ENCODE measurements at regions of chr3 and their contacts with region 1.

Region 1: GRCh38 chr3:106036696-106037095 is 167.9 kb upstream of the CBLB start:
- DNase-seq: no peak
- ATAC-seq: no peak
- H3K4me3 ChIP-seq: no peak overlapping the region
- H3K27ac ChIP-seq: no peak overlapping the region
- H3K4me1 ChIP-seq: no peaks in the 10 kb centered on the region
- H3K27me3 ChIP-seq: no peaks in the 10 kb centered on the region
- CTCF ChIP-seq: no peak
- EP300 ChIP-seq: no peak
- POLR2A ChIP-seq: no peak
- RAD21 ChIP-seq: no peak

Region 2: DNA sequence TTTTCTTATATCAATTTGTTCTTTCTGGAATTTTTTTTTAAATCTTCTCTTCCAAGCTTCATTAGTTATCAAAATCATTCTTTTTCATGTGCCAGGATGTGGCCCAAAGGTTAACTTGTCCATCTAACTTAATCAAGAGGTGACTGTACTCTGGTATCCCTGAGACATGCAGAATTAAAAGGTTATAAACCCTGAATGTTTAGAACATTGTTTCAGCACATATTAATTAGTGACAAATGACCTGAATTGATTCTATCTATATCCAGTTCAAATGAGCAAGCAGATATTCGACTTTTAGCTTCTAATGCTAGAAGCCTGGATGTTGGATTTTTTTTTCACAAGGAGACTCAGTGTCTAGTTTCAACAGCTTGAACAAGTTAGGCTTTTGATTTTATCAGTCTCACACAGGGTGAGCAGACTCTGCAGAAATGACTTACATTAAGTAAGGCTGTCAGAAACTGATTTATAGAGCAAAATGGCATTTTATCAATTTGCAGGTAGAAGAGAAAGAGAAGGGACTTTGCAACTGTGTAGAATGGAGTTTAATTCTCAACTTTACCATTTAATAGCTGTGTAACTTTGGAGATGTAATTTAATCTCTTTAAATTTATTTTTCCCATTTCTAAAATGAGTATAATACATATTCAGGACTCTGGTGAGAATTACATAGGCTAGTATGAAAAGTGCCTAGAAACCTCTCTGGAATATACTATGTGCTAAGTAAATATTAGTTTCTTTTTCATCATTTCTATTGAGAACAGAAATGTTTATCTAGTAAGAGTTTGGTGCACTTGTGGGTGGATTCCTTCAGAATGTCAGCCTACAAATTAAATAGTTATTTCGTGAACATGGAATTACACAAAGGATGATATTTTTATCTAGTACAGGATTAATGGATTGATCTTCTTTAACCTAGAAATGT is 570.0 kb before region 1 on chr3:
- CTCF ChIA-PET with region 1: no interaction called
- POLR2A ChIA-PET with region 1: no interaction called
- RAD21 ChIA-PET with region 1: no interaction called
- SMC1A ChIA-PET with region 1: no interaction called
- in situ Hi-C with region 1: no loop called
- intact Hi-C with region 1: no loop called
- DNase-seq: no peak
- ATAC-seq: no peak
- H3K4me3 ChIP-seq: no peak overlapping the region
- H3K27ac ChIP-seq: no peak overlapping the region
- H3K4me1 ChIP-seq: no peaks in the 10 kb centered on the region
- H3K27me3 ChIP-seq: no peaks in the 10 kb centered on the region
- CTCF ChIP-seq: no peak
- EP300 ChIP-seq: no peak
- POLR2A ChIP-seq: no peak
- RAD21 ChIP-seq: no peak

Region 3: GRCh38 chr3:106056931-106057330 is 20.2 kb after region 1 on chr3:
- CTCF ChIA-PET with region 1: interaction called, 3 read pairs
- POLR2A ChIA-PET with region 1: no interaction called
- RAD21 ChIA-PET with region 1: interaction called, 3 read pairs
- SMC1A ChIA-PET with region 1: interaction called, 10 read pairs
- in situ Hi-C with region 1: no loop called
- intact Hi-C with region 1: no loop called
- DNase-seq: no peak
- ATAC-seq: no peak
- H3K4me3 ChIP-seq: no peak overlapping the region
- H3K27ac ChIP-seq: no peak overlapping the region
- H3K4me1 ChIP-seq: no peaks in the 10 kb centered on the region
- H3K27me3 ChIP-seq: no peaks in the 10 kb centered on the region
- CTCF ChIP-seq: no peak
- EP300 ChIP-seq: no peak
- POLR2A ChIP-seq: no peak
- RAD21 ChIP-seq: no peak

Region 4: GRCh38 chr3:106119614-106120082 is 83.0 kb after region 1 on chr3:
- CTCF ChIA-PET with region 1: no interaction called
- POLR2A ChIA-PET with region 1: no interaction called
- RAD21 ChIA-PET with region 1: no interaction called
- SMC1A ChIA-PET with region 1: no interaction called
- in situ Hi-C with region 1: no loop called
- intact Hi-C with region 1: no loop called
- DNase-seq: no peak
- ATAC-seq: peak; percentile 43
- H3K4me3 ChIP-seq: no peak overlapping the region
- H3K27ac ChIP-seq: no peak overlapping the region
- H3K4me1 ChIP-seq: no peaks in the 10 kb centered on the region
- H3K27me3 ChIP-seq: no peaks in the 10 kb centered on the region
- CTCF ChIP-seq: no peak
- EP300 ChIP-seq: 0 out of 4 replicates have a peak, but pooled peaks of 1 of the 2 experiments have one; percentile 8
- POLR2A ChIP-seq: no peak
- RAD21 ChIP-seq: no peak

Measured in GM12878 (cell line).